ENCODE measurements at regions of chr1 and their contacts with region 1.

Region 1: DNA sequence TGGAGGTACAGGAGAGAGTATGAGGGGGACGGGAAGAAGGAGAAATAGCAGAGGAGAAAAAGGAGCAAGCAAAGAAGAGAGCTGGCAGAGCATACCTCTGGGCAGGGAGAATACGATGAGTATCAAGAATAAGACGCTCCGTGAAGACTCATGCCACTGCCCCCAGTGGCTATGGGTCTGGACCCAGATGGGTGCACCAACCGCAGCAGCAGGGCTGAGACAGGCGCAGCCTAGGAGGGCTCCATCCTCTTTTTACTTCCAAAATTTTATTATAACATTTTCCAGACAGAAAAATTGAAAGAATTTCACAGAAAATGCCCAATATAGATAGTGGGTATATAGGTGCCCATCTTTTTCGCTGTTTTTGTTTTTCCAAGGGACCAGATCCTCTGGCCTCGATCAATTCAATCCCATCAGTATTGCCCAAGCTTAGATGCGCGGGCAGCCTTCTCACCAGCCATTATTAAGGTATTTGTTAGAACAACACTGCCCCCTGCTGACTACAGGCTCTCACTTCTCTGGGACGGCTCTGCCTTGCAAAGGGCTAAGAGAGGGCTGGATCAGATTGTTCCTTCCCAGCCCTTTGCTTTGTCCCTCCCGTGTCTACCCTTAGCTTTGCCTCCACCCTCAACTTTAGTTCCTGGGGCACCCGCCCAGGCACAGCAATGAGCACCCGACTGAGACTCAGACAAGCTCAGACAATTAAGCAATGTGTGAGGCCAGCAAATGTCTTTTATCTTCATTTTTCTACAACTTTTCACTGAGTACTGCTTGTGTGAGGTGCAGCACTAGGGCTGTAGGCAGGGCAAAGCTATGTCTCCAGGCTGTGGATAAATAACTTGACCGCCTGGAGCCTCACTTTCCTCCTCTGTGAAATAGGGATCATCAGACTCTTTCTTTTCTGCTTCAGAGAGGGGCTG is 17.5 kb upstream of the CAMK1G start:
- DNase-seq: peak; percentile 62
- H3K4me3 ChIP-seq: no peak overlapping the region
- H3K27ac ChIP-seq: no peak overlapping the region
- H3K4me1 ChIP-seq: no peaks in the 10 kb centered on the region
- H3K27me3 ChIP-seq: peaks cover 12 to 17% of the 10 kb centered on the region in 2 experiments
- CTCF ChIP-seq: peak; percentile 70 to 81
- POLR2A ChIP-seq: no peak

Region 2: DNA sequence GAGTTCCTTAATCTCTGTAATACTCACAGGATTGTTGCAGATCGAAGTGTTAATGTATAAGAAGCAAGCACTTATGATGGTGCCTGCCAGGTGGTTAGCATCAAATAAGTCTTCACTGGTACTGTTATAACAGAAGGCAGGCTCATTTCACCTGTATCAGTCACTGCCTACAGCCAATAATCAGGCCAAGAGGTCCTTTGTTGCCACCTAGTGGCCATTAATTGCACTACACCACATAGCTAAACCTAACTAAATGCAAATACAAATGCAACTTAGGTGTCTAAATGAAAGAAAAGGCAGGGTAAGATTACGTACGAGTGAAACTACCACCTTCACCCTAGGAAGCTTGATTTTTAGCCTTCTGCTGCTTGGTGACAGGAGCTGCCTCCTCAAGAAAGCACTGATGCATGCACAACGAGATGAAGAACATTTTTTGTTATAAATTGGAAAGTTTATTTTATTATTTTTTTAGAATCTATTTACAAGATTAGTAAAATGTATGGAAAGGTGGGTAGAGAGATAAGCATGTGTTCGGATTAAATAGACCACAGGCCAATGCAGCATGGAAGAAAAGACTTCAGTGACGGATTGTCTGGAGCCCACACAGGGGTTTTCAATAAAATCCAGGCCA is 317.3 kb before region 1 on chr1:
- CTCF ChIA-PET with region 1: interaction called, 15 read pairs
- POLR2A ChIA-PET with region 1: no interaction called
- dilution Hi-C with region 1: no loop called
- intact Hi-C with region 1: no loop called
- DNase-seq: peak; percentile 74
- H3K4me3 ChIP-seq: no peak overlapping the region
- H3K27ac ChIP-seq: no peak overlapping the region
- H3K4me1 ChIP-seq: no peaks in the 10 kb centered on the region
- H3K27me3 ChIP-seq: peaks cover 0 to 2% of the 10 kb centered on the region in 2 experiments
- CTCF ChIP-seq: peak; percentile 67 to 76
- POLR2A ChIP-seq: no peak

Region 3: GRCh38 chr1:209576798-209577197 is 10.8 kb after region 1 on chr1:
- CTCF ChIA-PET with region 1: interaction called, 20 read pairs
- POLR2A ChIA-PET with region 1: no interaction called
- dilution Hi-C with region 1: no loop called
- intact Hi-C with region 1: no loop called
- DNase-seq: peak; percentile 72
- H3K4me3 ChIP-seq: no peak overlapping the region
- H3K27ac ChIP-seq: no peak overlapping the region
- H3K4me1 ChIP-seq: peaks cover 8% of the 10 kb centered on the region
- H3K27me3 ChIP-seq: peaks cover 13 to 17% of the 10 kb centered on the region in 2 experiments
- CTCF ChIP-seq: peak; percentile 94 to 95
- POLR2A ChIP-seq: no peak

Region 4: GRCh38 chr1:209627732-209628196 is 61.7 kb after region 1 on chr1:
- CTCF ChIA-PET with region 1: interaction called, 119 read pairs
- POLR2A ChIA-PET with region 1: no interaction called
- dilution Hi-C with region 1: no loop called
- intact Hi-C with region 1: loop called (anchors 1 kb)
- DNase-seq: peak; percentile 78
- H3K4me3 ChIP-seq: no peak overlapping the region
- H3K27ac ChIP-seq: no peak overlapping the region
- H3K4me1 ChIP-seq: no peaks in the 10 kb centered on the region
- H3K27me3 ChIP-seq: no peaks in the 10 kb centered on the region
- CTCF ChIP-seq: peak; percentile 95 to 99
- POLR2A ChIP-seq: no peak

Region 5: DNA sequence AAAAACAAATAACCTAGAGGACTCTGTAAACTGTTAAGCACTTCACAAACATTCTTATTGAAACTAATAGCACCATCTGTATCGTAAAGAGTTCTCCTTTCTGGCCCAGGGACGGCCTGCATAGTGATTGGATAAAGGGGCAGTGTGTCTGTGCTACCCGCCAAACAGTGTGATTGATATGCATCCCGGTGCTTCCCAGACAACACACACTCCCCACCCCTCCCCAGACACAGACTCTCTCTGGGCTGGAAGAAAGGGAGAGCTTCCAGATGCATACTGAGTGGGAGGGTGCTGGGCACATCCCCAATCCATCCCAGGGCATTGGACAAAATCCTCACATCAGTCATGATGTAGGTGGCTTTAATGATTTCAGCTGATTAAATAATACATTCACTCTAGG is 142.3 kb after region 1 on chr1:
- CTCF ChIA-PET with region 1: interaction called, 10 read pairs
- POLR2A ChIA-PET with region 1: no interaction called
- dilution Hi-C with region 1: no loop called
- intact Hi-C with region 1: no loop called
- DNase-seq: no peak
- H3K4me3 ChIP-seq: no peak overlapping the region
- H3K27ac ChIP-seq: no peak overlapping the region
- H3K4me1 ChIP-seq: peaks cover 5% of the 10 kb centered on the region
- H3K27me3 ChIP-seq: no peaks in the 10 kb centered on the region
- CTCF ChIP-seq: no peak
- POLR2A ChIP-seq: no peak

Region 6: DNA sequence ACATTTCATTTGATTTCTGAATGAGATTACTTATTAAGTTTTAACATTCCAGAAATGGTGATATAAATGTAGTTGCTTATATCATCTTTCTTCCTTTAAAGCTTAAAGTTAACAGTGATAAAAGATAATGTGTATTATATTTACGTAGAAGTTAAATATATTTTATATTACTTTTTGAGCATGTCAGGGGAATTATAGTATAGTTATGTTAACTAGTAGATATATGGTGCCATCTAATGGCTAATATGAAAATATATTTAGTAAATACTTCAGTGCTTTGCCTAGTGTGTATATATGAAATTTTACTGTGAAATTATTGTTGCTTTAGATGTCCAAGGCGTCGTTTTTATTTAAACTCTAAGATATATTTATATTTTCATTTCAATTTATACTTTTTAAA is 423.5 kb after region 1 on chr1:
- CTCF ChIA-PET with region 1: no interaction called
- POLR2A ChIA-PET with region 1: no interaction called
- dilution Hi-C with region 1: no loop called
- intact Hi-C with region 1: loop called (anchors 10 kb)
- DNase-seq: peak; percentile 31
- H3K4me3 ChIP-seq: no peak overlapping the region
- H3K27ac ChIP-seq: no peak overlapping the region
- H3K4me1 ChIP-seq: no peaks in the 10 kb centered on the region
- H3K27me3 ChIP-seq: peaks cover 3 to 14% of the 10 kb centered on the region in 2 experiments
- CTCF ChIP-seq: no peak
- POLR2A ChIP-seq: no peak